ENCODE measurements at regions of chr16 and their contacts with region 1.

Region 1: DNA sequence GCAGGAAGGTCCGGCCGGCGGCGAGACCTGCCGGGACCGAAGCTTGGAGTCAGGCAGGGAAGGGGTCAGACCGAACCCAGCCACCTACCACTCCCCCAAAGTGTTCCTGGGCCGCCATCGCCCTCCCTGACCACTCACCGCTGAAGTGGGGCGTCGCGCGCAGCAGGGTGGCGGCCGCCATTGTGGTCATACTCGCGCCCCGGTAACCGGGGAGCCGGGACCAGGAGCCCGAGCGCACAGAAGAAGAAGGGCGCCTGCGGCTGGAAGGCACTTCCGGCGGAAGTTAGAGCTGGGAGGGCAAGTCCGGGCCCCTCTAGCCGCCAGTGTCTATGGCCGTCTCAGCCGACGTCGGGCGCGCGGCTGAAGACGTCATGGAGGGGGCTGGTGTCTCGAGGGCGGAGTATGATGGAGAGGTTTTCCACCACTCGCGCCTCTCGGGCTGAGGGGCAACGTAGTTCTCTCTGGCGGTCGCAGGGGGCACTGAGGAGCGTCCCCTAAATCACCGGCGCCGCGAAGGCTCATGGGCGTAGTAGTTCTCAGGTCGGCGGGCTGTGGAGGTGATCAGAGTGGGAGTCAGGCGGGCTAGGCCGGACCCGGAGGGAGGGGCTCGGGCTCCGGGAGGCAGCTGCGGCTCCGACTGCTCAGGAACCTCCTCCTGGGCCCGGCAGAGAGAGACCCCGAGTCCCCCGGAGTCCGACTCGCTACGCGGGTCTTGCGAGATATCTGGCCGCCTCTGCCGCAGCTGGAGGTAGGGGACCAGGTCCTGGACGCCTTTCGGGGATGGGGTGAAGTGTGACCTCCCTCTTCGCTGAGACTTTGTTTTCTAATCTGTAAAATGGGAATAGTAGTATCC is at the start of gene TUFM:
- DNase-seq: peak; percentile 99
- ATAC-seq: peak; percentile 94
- H3K4me3 Mint-ChIP-seq: peak within 1 kb of the TSS; percentile 97
- H3K27ac Mint-ChIP-seq: peak within 1 kb of the TSS; percentile 97
- H3K4me1 Mint-ChIP-seq: peaks cover 23% of the 10 kb centered on the region
- H3K27me3 Mint-ChIP-seq: no peaks in the 10 kb centered on the region
- total RNA-seq, gene TUFM: 224 to 241 TPM

Region 2: GRCh38 chr16:28863929-28864793 is 17.9 kb after region 1 on chr16:
- CTCF ChIA-PET with region 1: interaction called, 27 read pairs
- POLR2A ChIA-PET with region 1: interaction called, 21 read pairs
- intact Hi-C with region 1: loop called (anchors 1 kb)
- DNase-seq: peak; percentile 44
- ATAC-seq: no peak
- H3K4me3 Mint-ChIP-seq: peak overlapping the region; percentile 96
- H3K27ac Mint-ChIP-seq: peak overlapping the region; percentile 96
- H3K4me1 Mint-ChIP-seq: peaks cover 21% of the 10 kb centered on the region
- H3K27me3 Mint-ChIP-seq: no peaks in the 10 kb centered on the region

Region 3: GRCh38 chr16:28879841-28880588 is 33.7 kb after region 1 on chr16:
- CTCF ChIA-PET with region 1: interaction called, 4 read pairs
- POLR2A ChIA-PET with region 1: no interaction called
- intact Hi-C with region 1: loop called (anchors 1 kb)
- DNase-seq: peak; percentile 97
- ATAC-seq: peak; percentile 97
- H3K4me3 Mint-ChIP-seq: peak overlapping the region; percentile 85
- H3K27ac Mint-ChIP-seq: peak overlapping the region; percentile 76
- H3K4me1 Mint-ChIP-seq: peaks cover 20% of the 10 kb centered on the region
- H3K27me3 Mint-ChIP-seq: peaks cover 7% of the 10 kb centered on the region

Region 4: DNA sequence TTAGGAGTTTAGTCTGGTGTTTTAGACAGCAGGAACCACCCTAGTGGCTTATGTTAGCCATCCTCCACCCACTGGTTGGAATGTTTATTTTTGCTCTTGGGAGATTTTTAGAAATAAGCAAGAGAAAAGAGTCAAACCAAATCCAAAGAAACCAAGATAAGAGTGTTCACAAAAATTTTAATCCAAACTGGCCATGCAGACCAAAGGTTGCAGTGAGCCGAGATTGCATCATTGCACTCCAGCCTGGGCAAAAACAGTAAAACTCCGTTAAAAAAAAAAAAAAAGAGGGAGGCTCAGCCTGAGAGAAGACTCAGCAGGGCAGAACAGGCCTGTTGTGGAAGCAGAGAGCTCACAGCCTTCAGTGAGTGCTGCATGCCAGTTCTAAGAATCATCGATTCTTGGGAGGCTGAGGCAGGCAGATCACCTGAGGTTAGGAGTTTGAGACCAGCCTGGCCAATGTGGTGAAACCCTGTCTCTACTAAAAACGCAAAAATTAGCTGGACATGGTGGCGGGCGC is 911.7 kb after region 1 on chr16:
- CTCF ChIA-PET with region 1: no interaction called
- POLR2A ChIA-PET with region 1: no interaction called
- intact Hi-C with region 1: no loop called
- DNase-seq: no peak
- ATAC-seq: no peak
- H3K4me3 Mint-ChIP-seq: no peak overlapping the region
- H3K27ac Mint-ChIP-seq: no peak overlapping the region
- H3K4me1 Mint-ChIP-seq: peaks cover 32% of the 10 kb centered on the region
- H3K27me3 Mint-ChIP-seq: no peaks in the 10 kb centered on the region

Measured in activated CD4-positive, alpha-beta T cell treated with anti-CD3 and anti-CD28 coated beads for 36 hours (primary cell).